AG04449 (cell line): ENCODE measurements at regions of chr14 and their contacts with region 1.

Region 1: DNA sequence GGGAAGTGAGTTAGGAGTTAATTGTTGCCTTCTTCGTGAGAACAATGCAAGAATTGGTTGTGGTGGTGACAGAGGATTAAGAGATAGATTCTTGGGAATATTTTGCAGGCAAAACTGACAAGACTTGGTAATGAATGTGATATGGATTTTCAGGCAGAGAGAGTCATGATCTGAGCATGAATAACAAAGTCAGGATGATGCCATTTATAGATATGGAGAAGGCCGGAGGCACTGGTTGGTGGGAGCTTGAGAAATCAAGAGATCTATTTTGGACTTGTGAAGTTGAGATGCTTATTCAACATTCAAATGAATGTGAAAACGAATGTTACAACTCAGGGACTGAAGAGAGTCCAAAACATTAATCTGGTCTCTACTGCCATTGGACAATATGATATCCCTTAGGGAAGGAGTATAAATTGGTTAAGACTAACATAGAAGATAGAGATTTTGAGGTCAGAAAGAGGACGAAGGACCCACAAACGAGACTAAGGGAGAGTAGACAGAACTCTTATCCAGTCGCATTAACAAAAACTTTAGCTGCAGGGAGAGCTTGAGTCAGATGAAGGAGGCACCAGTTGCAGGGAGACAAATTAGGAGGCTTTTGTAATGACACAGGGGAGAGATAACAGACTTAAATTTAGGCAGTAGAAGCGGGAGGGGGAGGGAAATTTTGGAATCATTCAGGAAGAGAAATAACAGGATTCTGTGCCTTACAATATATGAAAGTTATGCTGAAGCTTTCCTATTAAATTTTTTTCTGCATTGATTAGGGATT is 1090.6 kb downstream of the GALC start:
- DNase-seq: no peak
- H3K4me3 ChIP-seq: no peak overlapping the region
- CTCF ChIP-seq: no peak

Region 2: DNA sequence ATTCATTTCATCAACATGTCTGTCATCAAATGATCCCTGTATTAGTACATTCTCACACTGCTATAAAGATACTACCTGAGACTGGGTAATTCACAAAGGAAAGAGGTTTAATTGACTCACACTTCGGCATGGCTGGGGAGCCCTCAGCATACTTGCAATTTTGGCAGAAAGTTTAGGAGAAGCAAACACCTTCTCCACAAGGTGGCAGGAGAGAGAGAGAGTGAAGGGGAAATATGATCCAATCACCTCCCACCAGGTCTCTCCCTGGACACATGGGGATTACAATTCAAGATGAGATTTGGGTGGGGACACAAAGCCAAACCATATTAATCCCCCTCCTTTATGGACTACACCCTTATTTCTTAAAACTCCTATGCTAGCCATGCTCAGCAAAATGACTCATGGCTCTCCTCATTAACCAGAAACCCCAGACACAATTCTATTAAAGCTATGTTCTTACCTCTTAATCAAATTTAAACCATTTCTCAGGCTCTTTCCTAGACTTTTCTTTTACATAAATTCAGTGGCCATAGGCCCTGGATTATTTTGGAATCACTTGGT is 440.1 kb before region 1 on chr14:
- CTCF ChIA-PET with region 1: interaction called, 10 read pairs
- POLR2A ChIA-PET with region 1: no interaction called
- DNase-seq: no peak
- H3K4me3 ChIP-seq: no peak overlapping the region
- CTCF ChIP-seq: peak; percentile 31